ENCODE measurements at regions of chr20 and their contacts with region 1.

Region 1: DNA sequence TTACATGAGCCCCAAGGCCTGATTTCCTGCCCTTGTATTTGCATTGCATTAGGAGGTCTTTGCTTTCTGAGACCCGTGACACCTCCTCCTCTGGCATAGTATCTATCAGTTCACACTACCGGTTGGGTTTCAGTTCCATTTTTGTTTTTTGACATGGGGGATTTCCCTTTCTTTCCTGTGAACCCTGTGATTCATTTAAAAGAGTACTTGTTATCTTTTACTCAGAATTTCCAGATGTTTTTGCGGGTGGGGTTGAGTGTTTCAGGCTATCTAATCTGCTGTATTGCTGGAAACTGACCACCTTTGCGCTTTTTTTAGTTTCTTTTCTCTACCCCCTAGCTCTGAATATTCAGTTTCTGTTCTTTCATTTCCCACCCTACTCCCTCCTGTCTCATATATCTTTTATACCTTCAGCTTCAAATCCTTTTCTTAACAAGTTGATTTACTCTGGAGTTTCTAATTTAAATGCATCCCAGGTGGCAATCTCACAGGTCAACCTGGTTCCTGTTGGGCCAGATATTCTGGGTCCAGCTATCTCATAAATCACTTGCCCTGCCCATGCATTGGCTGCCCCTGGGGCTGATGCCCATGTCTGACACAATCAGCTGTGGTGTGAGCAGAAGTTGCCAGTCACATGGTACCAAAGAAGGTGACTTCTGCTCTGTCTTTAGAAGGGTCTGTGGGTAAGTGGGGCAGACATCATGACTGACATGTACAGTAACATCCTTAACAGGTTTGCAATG is 14.3 kb upstream of the NCOA3 start:
- DNase-seq: peak; percentile 99
- ATAC-seq: peak; percentile 84
- H3K4me3 ChIP-seq: peak overlapping the region; percentile 43; the same call in 1 of the 2 replicates
- H3K27ac ChIP-seq: peak overlapping the region; percentile 98
- H3K4me1 ChIP-seq: peaks cover 56% of the 10 kb centered on the region
- H3K27me3 ChIP-seq: no peaks in the 10 kb centered on the region
- CTCF ChIP-seq: no peak
- EP300 ChIP-seq: peak; percentile 87 to 92
- POLR2A ChIP-seq: no peak
- RAD21 ChIP-seq: 0 out of 2 replicates have a peak, but pooled peaks have one; percentile 1

Region 2: DNA sequence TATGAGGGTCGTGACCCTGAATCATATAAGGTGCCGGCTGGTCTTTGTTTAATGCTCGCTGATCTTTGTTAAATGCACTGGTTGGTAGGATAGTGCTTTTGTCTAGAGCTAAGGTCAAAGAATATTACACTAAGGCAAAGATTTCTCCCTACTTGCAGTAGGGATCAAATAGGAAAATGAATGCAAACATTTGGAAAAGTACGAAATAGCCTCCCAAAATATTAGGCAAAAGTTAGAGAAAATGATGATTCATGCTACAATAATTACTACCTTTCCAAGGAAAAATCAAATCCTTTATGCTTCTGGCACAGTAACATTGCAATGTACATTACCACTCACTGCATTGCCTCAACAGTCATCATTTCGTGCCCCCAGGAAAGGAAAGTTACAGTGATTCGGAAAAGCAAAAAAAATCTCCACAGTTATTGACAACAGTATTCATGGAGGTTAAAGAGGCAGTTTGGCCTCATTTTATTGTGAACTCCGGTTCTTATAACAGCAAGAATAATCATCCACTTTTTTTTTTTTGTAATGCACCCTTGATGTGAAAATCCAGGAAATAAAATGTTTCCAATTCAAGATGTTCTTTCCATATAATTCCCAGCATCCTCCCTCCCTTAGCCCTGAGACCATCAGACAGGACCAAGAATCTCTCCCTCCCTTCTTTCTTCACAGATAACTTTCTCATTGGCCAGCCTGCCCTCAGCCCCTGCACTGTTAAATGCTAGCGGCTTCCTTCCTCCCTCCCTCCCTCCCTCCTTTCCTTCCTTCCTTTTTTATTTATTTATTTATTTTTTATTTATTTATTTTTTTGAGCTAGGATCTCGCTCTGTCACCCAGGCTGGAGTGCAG is 69.1 kb before region 1 on chr20:
- CTCF ChIA-PET with region 1: interaction called, 21 read pairs
- POLR2A ChIA-PET with region 1: interaction called, 55 read pairs
- RAD21 ChIA-PET with region 1: interaction called, 143 read pairs
- SMC1A ChIA-PET with region 1: interaction called, 122 read pairs
- in situ Hi-C with region 1: no loop called
- intact Hi-C with region 1: loop called (anchors 1 kb)
- DNase-seq: no peak
- ATAC-seq: no peak
- H3K4me3 ChIP-seq: no peak overlapping the region
- H3K27ac ChIP-seq: no peak overlapping the region
- H3K4me1 ChIP-seq: peaks cover 38% of the 10 kb centered on the region
- H3K27me3 ChIP-seq: no peaks in the 10 kb centered on the region
- CTCF ChIP-seq: no peak
- EP300 ChIP-seq: no peak
- POLR2A ChIP-seq: no peak
- RAD21 ChIP-seq: no peak

Region 3: DNA sequence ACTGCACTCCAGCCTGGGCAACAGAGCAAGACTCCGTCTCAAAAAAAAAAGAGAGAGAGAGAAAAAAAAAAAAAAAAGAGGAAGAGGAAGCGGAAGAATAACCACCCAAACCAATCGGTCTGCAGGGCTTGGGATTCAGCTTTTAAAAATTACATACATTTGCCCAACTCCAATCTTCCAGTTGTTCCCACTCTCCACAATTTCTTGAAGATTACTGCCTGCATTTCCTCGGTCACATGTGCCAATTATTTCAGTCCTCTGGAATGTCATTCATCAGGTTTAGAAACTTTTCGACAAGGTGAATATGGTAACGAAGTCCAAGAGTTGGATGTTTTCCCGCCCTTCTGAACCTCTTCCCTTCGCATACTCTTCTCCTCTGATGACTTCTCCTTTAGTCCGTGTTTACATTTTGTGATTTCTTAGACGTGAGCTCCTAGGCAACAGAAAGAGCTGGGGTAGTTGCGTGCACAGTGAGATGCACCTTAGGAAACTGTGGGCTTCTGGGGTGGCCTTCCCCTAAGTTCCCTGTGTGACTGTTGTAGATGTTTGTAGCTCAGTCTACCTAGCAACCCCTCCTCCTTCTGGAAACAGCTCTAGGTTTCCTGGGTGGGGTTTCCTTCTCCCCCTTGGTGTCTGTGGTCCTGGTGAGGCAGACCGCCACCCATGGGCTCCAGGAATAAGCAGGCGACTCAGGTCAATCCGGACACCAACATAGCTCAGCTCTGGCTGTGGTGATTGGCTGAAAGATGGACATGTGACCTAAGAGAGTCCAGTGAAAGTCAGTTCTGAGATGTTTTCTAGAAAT is 48.6 kb before region 1 on chr20:
- CTCF ChIA-PET with region 1: interaction called, 3 read pairs
- POLR2A ChIA-PET with region 1: interaction called, 7 read pairs
- RAD21 ChIA-PET with region 1: interaction called, 14 read pairs
- SMC1A ChIA-PET with region 1: interaction called, 11 read pairs
- in situ Hi-C with region 1: no loop called
- intact Hi-C with region 1: no loop called
- DNase-seq: peak; percentile 75
- ATAC-seq: peak; percentile 75
- H3K4me3 ChIP-seq: peak overlapping the region; percentile 39; the same call in 1 of the 2 replicates
- H3K27ac ChIP-seq: peak overlapping the region; percentile 91
- H3K4me1 ChIP-seq: peaks cover 19% of the 10 kb centered on the region
- H3K27me3 ChIP-seq: no peaks in the 10 kb centered on the region
- CTCF ChIP-seq: no peak
- EP300 ChIP-seq: peak; percentile 32 to 78; a peak in 3 of 4 replicates
- POLR2A ChIP-seq: no peak; the same call in 1 of the 2 replicates
- RAD21 ChIP-seq: no peak

Region 4: DNA sequence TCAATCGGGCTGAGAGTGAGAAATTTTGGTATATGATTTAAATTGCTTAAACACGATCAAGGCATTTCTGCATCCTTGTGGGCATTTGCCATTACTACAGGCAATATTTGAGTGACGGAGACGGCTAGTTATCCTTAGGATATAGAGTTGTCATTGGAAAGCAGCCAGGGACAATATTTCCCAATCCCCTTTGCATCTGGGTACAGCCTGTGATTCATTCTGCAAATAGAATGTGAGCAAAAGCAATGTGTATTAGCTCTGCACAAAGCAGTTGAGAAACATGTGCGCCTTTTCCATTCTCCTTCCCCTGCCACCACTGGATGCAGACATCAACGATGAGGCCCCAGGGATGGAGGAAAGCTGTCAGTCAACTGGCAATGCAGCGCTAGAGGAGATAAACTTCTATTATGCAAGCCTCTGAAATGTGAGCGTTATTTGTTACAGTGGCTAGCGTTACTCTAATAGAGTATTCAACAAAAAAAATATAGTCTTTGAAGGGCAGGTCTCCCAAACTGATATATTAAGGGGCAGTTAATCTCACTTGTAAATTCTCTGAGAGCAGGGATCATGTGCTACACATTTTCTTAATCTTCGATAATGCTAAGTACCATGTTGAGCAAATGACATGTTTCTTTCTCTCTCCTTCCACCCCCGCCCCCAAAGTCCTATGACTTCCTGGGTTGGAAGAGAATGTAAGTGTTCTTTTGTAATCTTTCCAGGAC is 22.8 kb before region 1 on chr20:
- CTCF ChIA-PET with region 1: no interaction called
- POLR2A ChIA-PET with region 1: interaction called, 22 read pairs
- RAD21 ChIA-PET with region 1: interaction called, 18 read pairs
- SMC1A ChIA-PET with region 1: interaction called, 134 read pairs
- in situ Hi-C with region 1: no loop called
- intact Hi-C with region 1: no loop called
- DNase-seq: no peak
- ATAC-seq: no peak
- H3K4me3 ChIP-seq: no peak overlapping the region
- H3K27ac ChIP-seq: no peak overlapping the region
- H3K4me1 ChIP-seq: peaks cover 27% of the 10 kb centered on the region
- H3K27me3 ChIP-seq: no peaks in the 10 kb centered on the region
- CTCF ChIP-seq: no peak
- EP300 ChIP-seq: no peak
- POLR2A ChIP-seq: no peak
- RAD21 ChIP-seq: no peak

Region 5: DNA sequence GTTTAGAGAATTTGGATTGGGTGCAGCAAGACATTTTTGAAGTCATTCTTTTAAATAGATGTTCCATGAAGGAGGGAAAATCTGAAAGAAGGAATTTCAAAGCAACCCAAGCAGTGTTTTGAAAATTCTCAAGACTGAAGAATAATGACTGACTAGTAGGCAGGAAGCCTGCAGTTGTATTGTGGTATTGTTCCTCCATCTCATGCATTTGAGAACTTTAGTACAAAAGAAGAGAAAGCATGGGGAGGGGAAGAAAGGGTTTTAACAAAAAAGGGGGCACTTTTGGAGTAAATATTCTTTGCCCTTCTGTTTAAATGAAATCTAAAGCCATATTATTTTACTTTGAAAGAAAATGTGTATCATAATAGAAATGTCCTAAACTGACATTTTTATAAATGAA is 20.9 kb after region 1 on chr20:
- CTCF ChIA-PET with region 1: interaction called, 17 read pairs
- POLR2A ChIA-PET with region 1: interaction called, 116 read pairs
- RAD21 ChIA-PET with region 1: interaction called, 90 read pairs
- SMC1A ChIA-PET with region 1: interaction called, 125 read pairs
- in situ Hi-C with region 1: no loop called
- intact Hi-C with region 1: no loop called
- DNase-seq: no peak
- ATAC-seq: peak; percentile 35; the same call in 2 of the 3 replicates
- H3K4me3 ChIP-seq: peak overlapping the region; percentile 75
- H3K27ac ChIP-seq: peak overlapping the region; percentile 68
- H3K4me1 ChIP-seq: peaks cover 26% of the 10 kb centered on the region
- H3K27me3 ChIP-seq: no peaks in the 10 kb centered on the region
- CTCF ChIP-seq: no peak
- EP300 ChIP-seq: no peak
- POLR2A ChIP-seq: no peak
- RAD21 ChIP-seq: no peak

Region 6: GRCh38 chr20:47847868-47848531 is 360.7 kb after region 1 on chr20:
- CTCF ChIA-PET with region 1: no interaction called
- POLR2A ChIA-PET with region 1: no interaction called
- RAD21 ChIA-PET with region 1: no interaction called
- SMC1A ChIA-PET with region 1: no interaction called
- in situ Hi-C with region 1: no loop called
- intact Hi-C with region 1: no loop called
- DNase-seq: no peak
- ATAC-seq: peak; percentile 63
- H3K4me3 ChIP-seq: no peak overlapping the region
- H3K27ac ChIP-seq: no peak overlapping the region
- H3K4me1 ChIP-seq: no peaks in the 10 kb centered on the region
- H3K27me3 ChIP-seq: no peaks in the 10 kb centered on the region; a peak in 1 of 4 replicates
- CTCF ChIP-seq: no peak
- EP300 ChIP-seq: no peak
- POLR2A ChIP-seq: no peak
- RAD21 ChIP-seq: no peak